Natural killer cell (primary cell): ENCODE measurements at regions of chr2 and their contacts with region 1.

Region 1: DNA sequence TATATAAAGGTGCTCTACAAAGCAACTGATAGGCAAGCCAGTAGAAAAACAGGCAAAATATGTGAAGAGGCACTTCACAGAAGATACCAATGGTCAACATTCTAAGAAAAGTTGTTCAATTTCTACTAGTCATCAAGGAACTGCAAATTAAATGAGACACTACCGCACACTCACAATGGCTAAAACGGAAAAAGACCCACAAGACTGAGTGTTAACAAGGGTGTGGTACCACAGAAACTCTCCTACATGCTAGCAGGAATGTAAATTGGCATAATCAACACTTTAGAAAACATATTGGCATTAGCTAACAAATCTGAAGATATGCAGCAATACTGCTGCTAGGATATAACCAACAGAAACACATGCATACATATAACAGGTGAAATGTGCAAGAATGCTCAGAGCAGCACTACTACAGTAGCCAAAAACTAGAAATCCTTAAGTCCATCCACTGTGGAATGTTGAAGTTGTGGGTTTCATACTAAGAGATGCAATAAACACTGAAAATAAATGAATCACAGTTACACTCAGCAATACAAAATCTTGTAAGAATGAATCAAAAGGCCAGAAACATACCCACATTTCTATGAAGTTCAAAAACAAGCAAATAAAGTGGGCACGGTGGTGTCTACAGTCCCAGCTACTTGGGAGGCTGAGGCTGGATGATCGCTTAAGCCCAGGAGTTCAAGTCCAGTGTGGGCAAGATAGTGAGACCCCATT is 9.2 kb downstream of the RNU4ATAC start:
- DNase-seq: no peak
- ATAC-seq: peak; percentile 35 to 42 (median 41)
- H3K4me3 ChIP-seq: no peak overlapping the region
- H3K4me3 Mint-ChIP-seq: peak overlapping the region; percentile 79
- H3K27ac ChIP-seq: peak overlapping the region; percentile 71
- H3K27ac Mint-ChIP-seq: peak overlapping the region; percentile 81 to 89
- H3K4me1 ChIP-seq: peaks cover 5% of the 10 kb centered on the region
- H3K4me1 Mint-ChIP-seq: peaks cover 30 to 31% of the 10 kb centered on the region in 2 donors
- H3K27me3 ChIP-seq: no peaks in the 10 kb centered on the region
- H3K27me3 Mint-ChIP-seq: no peaks in the 10 kb centered on the region
- CTCF ChIP-seq: no peak

Region 2: DNA sequence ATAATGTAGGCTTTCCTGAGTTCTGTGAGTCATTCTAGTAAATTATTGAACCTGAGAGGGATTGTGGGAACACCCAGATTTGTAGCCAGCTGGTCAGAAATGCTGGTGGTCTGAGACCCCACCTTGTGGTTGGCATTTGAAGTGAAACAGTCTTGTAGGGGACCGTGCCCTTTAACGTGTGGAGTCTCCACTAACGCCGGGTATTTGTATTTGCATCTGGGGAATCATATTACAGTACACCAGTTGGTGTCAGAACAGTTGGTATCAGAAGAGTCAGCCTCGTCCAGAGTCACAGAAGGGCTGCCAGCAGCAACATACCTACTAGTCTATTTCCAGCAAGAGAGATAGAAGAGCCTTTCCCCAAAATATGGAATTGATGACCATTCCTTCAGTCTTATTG is 1818.4 kb before region 1 on chr2:
- intact Hi-C with region 1: no loop called
- DNase-seq: no peak
- ATAC-seq: no peak
- H3K4me3 ChIP-seq: no peak overlapping the region
- H3K4me3 Mint-ChIP-seq: no peak overlapping the region
- H3K27ac ChIP-seq: no peak overlapping the region
- H3K27ac Mint-ChIP-seq: no peak overlapping the region
- H3K4me1 ChIP-seq: no peaks in the 10 kb centered on the region
- H3K4me1 Mint-ChIP-seq: peaks cover 6% of the 10 kb centered on the region in 2 donors
- H3K27me3 ChIP-seq: no peaks in the 10 kb centered on the region
- H3K27me3 Mint-ChIP-seq: no peaks in the 10 kb centered on the region
- CTCF ChIP-seq: no peak

Region 3: GRCh38 chr2:121596221-121597080 is 56.5 kb after region 1 on chr2:
- intact Hi-C with region 1: loop called (anchors 10 kb)
- DNase-seq: peak in 1 of 2 donors; percentile 37
- ATAC-seq: peak; percentile 79 to 87 (median 86)
- H3K4me3 ChIP-seq: no peak overlapping the region
- H3K4me3 Mint-ChIP-seq: peak overlapping the region; percentile 79
- H3K27ac ChIP-seq: peak overlapping the region; percentile 54
- H3K27ac Mint-ChIP-seq: peak overlapping the region; percentile 74 to 89
- H3K4me1 ChIP-seq: peaks cover 7% of the 10 kb centered on the region
- H3K4me1 Mint-ChIP-seq: peaks cover 40 to 56% of the 10 kb centered on the region in 2 donors
- H3K27me3 ChIP-seq: no peaks in the 10 kb centered on the region
- H3K27me3 Mint-ChIP-seq: no peaks in the 10 kb centered on the region
- CTCF ChIP-seq: no peak

Region 4: DNA sequence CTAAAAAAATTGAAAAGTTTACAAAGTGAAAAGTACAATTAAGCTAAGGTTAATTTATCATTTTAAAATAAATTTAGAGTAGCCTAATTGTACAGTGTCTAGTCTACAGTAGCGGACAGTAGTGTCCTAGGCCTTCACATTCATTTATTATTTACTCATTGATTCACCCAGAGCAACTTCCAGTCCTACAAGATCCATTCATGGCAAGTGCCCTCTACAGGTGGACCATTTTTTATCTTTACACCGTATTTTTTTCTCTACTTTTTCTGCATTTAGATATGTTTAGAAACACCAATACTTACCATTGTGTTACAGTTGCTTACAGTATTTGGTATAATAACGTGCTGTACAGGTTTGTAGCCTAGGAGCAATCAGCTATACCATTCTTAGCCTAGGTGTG is 299.7 kb after region 1 on chr2:
- intact Hi-C with region 1: no loop called
- DNase-seq: no peak
- ATAC-seq: no peak
- H3K4me3 ChIP-seq: no peak overlapping the region
- H3K4me3 Mint-ChIP-seq: no peak overlapping the region
- H3K27ac ChIP-seq: no peak overlapping the region
- H3K27ac Mint-ChIP-seq: no peak overlapping the region
- H3K4me1 ChIP-seq: no peaks in the 10 kb centered on the region
- H3K4me1 Mint-ChIP-seq: no peaks in the 10 kb centered on the region
- H3K27me3 ChIP-seq: no peaks in the 10 kb centered on the region
- H3K27me3 Mint-ChIP-seq: peaks cover 4 to 5% of the 10 kb centered on the region in 2 donors
- CTCF ChIP-seq: no peak